CD8-positive, alpha-beta T cell (primary cell): ENCODE measurements at regions of chr11 and their contacts with region 1.

Region 1: DNA sequence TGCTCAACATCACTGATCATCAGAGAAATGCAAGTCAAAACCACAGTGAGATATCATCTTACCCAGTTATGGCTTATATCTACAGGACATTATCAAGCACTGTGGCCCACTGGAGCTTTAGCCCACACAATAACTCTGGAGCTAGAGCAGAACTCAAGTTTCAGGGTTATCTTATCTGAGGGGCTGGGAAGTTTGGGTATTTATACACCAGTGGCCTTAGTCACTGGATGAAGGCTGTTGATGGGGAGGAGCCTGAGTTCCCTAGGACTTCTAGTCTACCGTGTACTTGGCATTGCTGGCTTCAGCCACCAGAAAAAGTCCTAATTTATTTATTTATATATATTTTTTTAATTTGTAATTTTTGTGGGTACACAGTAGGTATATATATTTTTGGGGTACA is 19.3 kb downstream of the HSD17B12 start:
- DNase-seq: no peak
- ATAC-seq: no peak
- H3K4me3 ChIP-seq: no peak overlapping the region
- H3K4me3 Mint-ChIP-seq: no peak overlapping the region
- H3K27ac ChIP-seq: no peak overlapping the region
- H3K27ac Mint-ChIP-seq: no peak overlapping the region
- H3K4me1 ChIP-seq: no peaks in the 10 kb centered on the region
- H3K4me1 Mint-ChIP-seq: peaks cover 13% of the 10 kb centered on the region
- H3K27me3 ChIP-seq: no peaks in the 10 kb centered on the region
- H3K27me3 Mint-ChIP-seq: no peaks in the 10 kb centered on the region
- CTCF ChIP-seq: no peak

Region 2: DNA sequence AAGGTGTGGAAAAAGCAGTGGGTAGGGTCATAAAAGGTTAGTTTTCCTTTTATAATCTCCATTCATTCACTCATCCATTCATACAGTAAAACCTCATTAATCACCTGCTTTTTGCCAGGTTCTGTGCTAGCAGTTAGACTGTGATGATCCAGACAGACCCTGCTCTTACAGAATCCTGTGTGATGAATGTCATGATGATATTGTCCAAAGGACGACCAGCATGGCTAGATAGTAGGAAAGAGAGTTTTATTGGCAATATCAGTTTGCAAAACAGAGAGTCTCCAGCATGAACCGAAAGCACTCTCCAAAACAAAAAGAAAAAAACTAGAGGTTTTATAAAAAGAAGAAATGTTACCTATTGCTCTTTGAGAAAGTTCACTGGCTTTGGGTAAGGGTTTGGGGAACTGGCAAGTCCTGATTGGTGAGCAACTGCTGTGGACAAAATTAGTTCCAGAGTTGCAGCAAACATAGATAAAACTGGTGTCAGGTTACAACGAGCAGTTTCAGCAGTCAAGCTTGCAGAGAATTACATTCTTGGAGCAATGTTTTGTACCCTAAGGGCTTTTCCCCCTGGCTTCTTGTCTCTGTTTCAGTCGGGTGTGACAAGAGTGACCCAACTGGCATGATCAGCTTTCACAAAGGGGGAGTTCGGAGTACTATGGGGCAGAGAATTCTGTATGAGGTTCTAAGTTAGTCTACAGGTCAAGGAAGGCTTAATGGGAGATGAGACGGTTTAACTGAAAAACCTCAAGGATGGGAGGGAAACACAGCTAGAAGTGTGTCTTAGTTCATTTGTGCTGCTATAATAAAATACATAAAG is 38.9 kb after region 1 on chr11:
- CTCF ChIA-PET with region 1: no interaction called
- POLR2A ChIA-PET with region 1: interaction called, 5 read pairs
- intact Hi-C with region 1: loop called in 1 of 2 experiments (anchors 2 kb)
- DNase-seq: no peak
- ATAC-seq: no peak
- H3K4me3 ChIP-seq: no peak overlapping the region
- H3K4me3 Mint-ChIP-seq: no peak overlapping the region
- H3K27ac ChIP-seq: no peak overlapping the region
- H3K27ac Mint-ChIP-seq: no peak overlapping the region
- H3K4me1 ChIP-seq: no peaks in the 10 kb centered on the region
- H3K4me1 Mint-ChIP-seq: peaks cover 5% of the 10 kb centered on the region
- H3K27me3 ChIP-seq: no peaks in the 10 kb centered on the region
- H3K27me3 Mint-ChIP-seq: no peaks in the 10 kb centered on the region
- CTCF ChIP-seq: no peak

Region 3: DNA sequence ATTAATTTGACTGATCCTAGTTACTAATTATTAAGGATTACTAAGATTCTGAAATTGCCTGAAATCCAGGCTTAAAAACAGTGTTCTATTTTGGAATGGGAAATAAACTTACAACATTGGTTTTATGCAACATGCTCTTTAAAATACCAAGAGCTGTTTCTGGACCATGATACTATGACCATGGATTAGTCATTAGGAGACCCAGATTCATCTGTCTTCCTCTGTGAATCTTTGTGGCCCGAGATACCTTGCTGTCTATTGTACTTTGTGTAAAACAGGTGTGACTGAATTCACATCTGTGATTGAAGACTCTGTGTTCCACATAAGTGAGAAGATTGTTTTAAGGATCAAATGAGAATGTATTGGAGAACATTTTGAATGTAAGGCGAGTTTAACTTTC is 79.4 kb after region 1 on chr11:
- CTCF ChIA-PET with region 1: no interaction called
- POLR2A ChIA-PET with region 1: no interaction called
- intact Hi-C with region 1: no loop called
- DNase-seq: no peak
- ATAC-seq: no peak
- H3K4me3 ChIP-seq: no peak overlapping the region
- H3K4me3 Mint-ChIP-seq: no peak overlapping the region
- H3K27ac ChIP-seq: no peak overlapping the region
- H3K27ac Mint-ChIP-seq: no peak overlapping the region
- H3K4me1 ChIP-seq: no peaks in the 10 kb centered on the region
- H3K4me1 Mint-ChIP-seq: no peaks in the 10 kb centered on the region
- H3K27me3 ChIP-seq: no peaks in the 10 kb centered on the region
- H3K27me3 Mint-ChIP-seq: no peaks in the 10 kb centered on the region
- CTCF ChIP-seq: no peak

Region 4: GRCh38 chr11:43856993-43857392 is 157.1 kb after region 1 on chr11:
- CTCF ChIA-PET with region 1: no interaction called
- POLR2A ChIA-PET with region 1: no interaction called
- intact Hi-C with region 1: no loop called
- DNase-seq: no peak
- ATAC-seq: no peak
- H3K4me3 ChIP-seq: no peak overlapping the region
- H3K4me3 Mint-ChIP-seq: no peak overlapping the region
- H3K27ac ChIP-seq: no peak overlapping the region
- H3K27ac Mint-ChIP-seq: no peak overlapping the region
- H3K4me1 ChIP-seq: no peaks in the 10 kb centered on the region
- H3K4me1 Mint-ChIP-seq: no peaks in the 10 kb centered on the region
- H3K27me3 ChIP-seq: no peaks in the 10 kb centered on the region
- H3K27me3 Mint-ChIP-seq: no peaks in the 10 kb centered on the region
- CTCF ChIP-seq: no peak